CD14-positive monocyte (primary cell): ENCODE measurements at regions of chr4 and their contacts with region 1.

Region 1: DNA sequence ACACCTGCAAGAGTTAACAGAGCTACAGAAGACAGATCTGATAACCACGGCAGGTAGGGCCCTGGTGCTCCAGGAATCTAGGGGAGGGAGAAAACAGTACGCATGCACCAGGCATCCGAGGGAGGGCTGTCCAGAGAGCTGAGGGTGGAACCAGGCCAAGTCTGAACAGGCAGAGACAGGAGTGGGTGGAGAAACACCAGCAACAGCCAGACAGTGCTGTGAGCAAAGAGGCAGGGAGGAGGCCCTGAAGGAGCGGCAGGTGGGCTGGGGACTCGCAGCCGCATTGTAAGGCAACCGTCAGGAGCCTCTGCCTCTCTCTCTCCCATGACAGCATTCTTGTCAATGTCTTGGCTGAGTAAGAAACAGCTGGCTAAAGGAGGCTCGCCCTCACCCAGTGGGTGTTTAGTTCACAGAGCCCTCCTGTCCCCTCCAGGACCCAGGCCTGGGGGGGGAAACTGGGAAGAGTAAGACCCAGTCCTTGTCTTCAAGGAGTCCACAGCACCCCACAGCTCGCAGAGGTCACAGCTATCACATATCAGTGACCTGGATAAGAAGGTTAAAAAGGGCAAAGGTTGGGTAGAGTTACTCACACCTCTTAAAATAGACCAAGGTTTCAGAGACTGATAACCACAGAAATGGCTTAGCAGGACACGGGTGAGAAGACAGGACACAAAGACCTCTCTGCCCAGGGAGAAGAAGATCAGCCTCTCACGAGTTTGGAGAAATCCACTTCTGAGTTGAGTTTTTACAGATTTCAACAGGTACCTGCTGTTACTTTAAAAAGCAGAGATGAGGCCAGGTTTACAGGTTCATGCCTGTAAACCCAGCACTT is 10.5 kb downstream of the ACSL1 start:
- DNase-seq: no peak
- H3K4me3 ChIP-seq: peak overlapping the region in 1 of 3 experiments; percentile 44
- H3K4me3 Mint-ChIP-seq: peak overlapping the region; percentile 65 to 81
- H3K27ac ChIP-seq: peak overlapping the region; percentile 16 to 79
- H3K27ac Mint-ChIP-seq: peak overlapping the region; percentile 30 to 96 (median 91)
- H3K4me1 ChIP-seq: peaks cover 99% of the 10 kb centered on the region in 2 donors
- H3K4me1 Mint-ChIP-seq: peaks cover 97% of the 10 kb centered on the region
- H3K27me3 ChIP-seq: no peaks in the 10 kb centered on the region
- H3K27me3 Mint-ChIP-seq: peaks cover 0 to 1% (median 0%) of the 10 kb centered on the region in 3 donors
- CTCF ChIP-seq: no peak

Region 2: DNA sequence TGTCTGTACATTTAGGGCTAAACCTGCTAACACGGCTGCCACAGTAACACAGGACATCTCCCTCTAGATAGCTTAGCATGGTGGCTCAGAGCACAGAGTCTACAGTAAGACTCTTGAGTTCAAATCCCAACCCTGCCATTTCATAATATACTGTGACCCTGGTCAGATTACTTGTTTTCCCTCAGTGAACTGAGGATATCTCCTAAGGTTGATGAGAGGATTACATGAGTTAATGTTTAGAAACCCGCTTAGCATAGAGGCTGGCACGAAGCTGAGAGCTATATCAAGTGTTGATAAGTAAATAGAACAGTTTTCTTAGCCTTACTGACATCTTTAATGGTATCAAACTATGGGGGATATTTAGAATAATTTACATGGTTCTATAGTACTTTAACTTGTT is 203.2 kb before region 1 on chr4:
- intact Hi-C with region 1: no loop called
- DNase-seq: no peak
- H3K4me3 ChIP-seq: no peak overlapping the region
- H3K4me3 Mint-ChIP-seq: no peak overlapping the region
- H3K27ac ChIP-seq: no peak overlapping the region
- H3K27ac Mint-ChIP-seq: no peak overlapping the region
- H3K4me1 ChIP-seq: peaks cover 6 to 8% of the 10 kb centered on the region in 2 donors
- H3K4me1 Mint-ChIP-seq: peaks cover 15% of the 10 kb centered on the region
- H3K27me3 ChIP-seq: no peaks in the 10 kb centered on the region
- H3K27me3 Mint-ChIP-seq: peaks cover 0 to 2% (median 2%) of the 10 kb centered on the region in 3 donors
- CTCF ChIP-seq: no peak

Region 3: GRCh38 chr4:184792950-184793555 is 22.2 kb before region 1 on chr4:
- intact Hi-C with region 1: loop called in 1 of 2 experiments (anchors 2 kb)
- DNase-seq: peak; percentile 89 to 97 (median 96)
- H3K4me3 ChIP-seq: peak overlapping the region in 1 of 3 experiments; percentile 34
- H3K4me3 Mint-ChIP-seq: no peak overlapping the region
- H3K27ac ChIP-seq: peak overlapping the region; percentile 47 to 81
- H3K27ac Mint-ChIP-seq: peak overlapping the region; percentile 83 to 97 (median 95)
- H3K4me1 ChIP-seq: peaks cover 22 to 32% of the 10 kb centered on the region in 2 donors
- H3K4me1 Mint-ChIP-seq: peaks cover 38% of the 10 kb centered on the region
- H3K27me3 ChIP-seq: no peaks in the 10 kb centered on the region
- H3K27me3 Mint-ChIP-seq: peaks cover 0 to 2% (median 0%) of the 10 kb centered on the region in 3 donors
- CTCF ChIP-seq: no peak

Region 4: GRCh38 chr4:184961660-184962059 is 146.4 kb after region 1 on chr4:
- intact Hi-C with region 1: loop called (anchors 5 to 10 kb)
- DNase-seq: no peak
- H3K4me3 ChIP-seq: no peak overlapping the region
- H3K4me3 Mint-ChIP-seq: no peak overlapping the region
- H3K27ac ChIP-seq: no peak overlapping the region
- H3K27ac Mint-ChIP-seq: no peak overlapping the region
- H3K4me1 ChIP-seq: peaks cover 10 to 11% of the 10 kb centered on the region in 2 donors
- H3K4me1 Mint-ChIP-seq: peaks cover 13% of the 10 kb centered on the region
- H3K27me3 ChIP-seq: no peaks in the 10 kb centered on the region
- H3K27me3 Mint-ChIP-seq: peaks cover 2 to 13% (median 5%) of the 10 kb centered on the region in 3 donors
- CTCF ChIP-seq: no peak